CD4-positive, alpha-beta memory T cell (primary cell): ENCODE measurements at regions of chr3 and their contacts with region 1.

Region 1: DNA sequence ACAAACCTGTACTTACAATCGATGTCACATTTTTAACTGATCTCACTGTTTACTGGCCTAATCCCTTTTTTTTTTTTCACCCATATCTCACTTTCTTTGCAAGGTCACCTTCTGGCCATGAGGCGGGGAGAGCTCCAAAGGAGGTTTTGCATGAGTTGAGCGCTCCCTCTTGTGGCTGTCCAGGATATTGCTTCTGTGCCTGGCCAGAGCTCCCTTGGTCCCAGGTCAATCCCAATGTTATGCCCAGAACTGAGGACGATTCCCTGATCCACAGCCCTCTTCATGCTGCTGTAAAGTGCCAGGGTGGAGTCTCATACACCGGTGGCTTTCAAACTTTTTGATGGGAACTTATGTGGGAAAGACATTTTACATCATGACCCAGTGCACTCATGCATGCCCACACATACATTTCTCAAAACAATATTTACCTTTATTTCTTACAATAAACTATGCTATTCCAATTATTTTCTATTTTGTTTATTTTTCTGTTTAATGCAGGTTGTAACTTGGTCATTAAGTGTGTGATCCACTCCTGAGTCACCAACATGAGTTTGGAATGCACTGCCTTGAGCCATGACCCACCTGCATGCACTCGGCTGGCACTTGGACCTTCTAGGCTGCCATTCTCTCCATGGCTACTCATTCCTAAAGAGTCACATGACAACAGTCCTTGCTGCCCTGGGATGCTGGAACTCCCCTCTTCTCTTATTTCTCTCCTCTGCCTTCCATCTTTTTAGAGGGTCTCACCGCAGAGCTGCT is 9.6 kb upstream of the SST start:
- DNase-seq: peak; percentile 37 to 63 (median 54)
- H3K4me3 ChIP-seq: no peak overlapping the region
- H3K4me3 Mint-ChIP-seq: no peak overlapping the region
- H3K27ac ChIP-seq: no peak overlapping the region
- H3K27ac Mint-ChIP-seq: no peak overlapping the region
- H3K4me1 ChIP-seq: no peaks in the 10 kb centered on the region
- H3K4me1 Mint-ChIP-seq: peaks cover 0 to 2% (median 0%) of the 10 kb centered on the region in 4 donors
- H3K27me3 ChIP-seq: no peaks in the 10 kb centered on the region
- H3K27me3 Mint-ChIP-seq: peaks cover 29 to 43% of the 10 kb centered on the region in 2 donors

Region 2: DNA sequence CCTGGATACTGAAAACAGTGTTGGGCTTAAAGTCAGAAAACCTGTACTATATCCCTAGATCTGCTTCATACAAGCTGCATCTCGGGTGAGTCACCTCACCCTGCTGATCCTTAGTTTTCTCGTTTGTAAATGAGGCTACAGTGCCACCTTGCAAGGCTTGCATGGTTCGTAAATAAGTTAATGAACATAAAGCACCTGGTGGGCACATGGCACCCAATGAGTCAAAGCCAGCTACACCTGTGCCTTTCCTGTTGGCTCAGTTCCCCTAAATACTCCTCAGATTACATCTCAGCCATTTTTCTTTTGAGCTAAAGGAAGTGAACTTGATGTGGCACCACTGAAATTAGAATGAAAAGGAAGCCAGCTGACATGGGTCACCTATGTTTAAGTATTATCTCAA is 456.0 kb before region 1 on chr3:
- CTCF ChIA-PET with region 1: interaction called, 55 read pairs
- POLR2A ChIA-PET with region 1: no interaction called
- intact Hi-C with region 1: no loop called
- DNase-seq: no peak
- H3K4me3 ChIP-seq: no peak overlapping the region
- H3K4me3 Mint-ChIP-seq: no peak overlapping the region
- H3K27ac ChIP-seq: no peak overlapping the region
- H3K27ac Mint-ChIP-seq: no peak overlapping the region
- H3K4me1 ChIP-seq: no peaks in the 10 kb centered on the region
- H3K4me1 Mint-ChIP-seq: no peaks in the 10 kb centered on the region
- H3K27me3 ChIP-seq: peaks cover 3% of the 10 kb centered on the region
- H3K27me3 Mint-ChIP-seq: peaks cover 8 to 13% of the 10 kb centered on the region in 2 donors

Region 3: DNA sequence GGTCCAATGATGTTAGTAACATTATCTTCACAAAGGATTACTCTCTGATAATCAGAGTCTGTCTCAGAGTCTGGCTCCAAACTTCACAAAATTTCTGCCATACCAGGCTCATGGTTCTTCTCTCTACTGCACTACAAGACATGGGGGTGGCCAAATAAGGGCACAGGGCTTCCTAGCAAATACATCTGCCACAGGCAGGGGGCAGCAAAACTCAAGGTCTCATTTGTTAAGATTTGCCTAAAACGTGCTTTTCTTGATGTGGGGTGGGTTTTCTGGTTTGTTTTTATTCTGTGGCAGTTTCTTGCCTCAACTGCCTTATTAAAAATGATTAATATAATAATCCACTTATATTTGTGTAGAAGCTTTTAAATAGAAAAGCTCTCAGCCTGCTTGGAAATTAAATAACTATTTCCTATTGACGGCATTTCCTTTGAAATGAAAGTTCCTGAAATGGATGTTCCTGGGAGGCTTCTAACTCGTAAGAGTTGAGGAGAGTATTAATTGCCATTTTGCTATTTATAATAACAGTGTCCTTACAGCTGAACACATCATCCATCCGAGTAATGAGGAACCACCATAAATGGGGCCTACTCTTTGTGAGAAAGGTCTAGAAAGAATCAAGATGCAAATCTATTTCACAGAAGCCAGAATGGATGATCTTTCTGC is 63.4 kb before region 1 on chr3:
- CTCF ChIA-PET with region 1: interaction called, 15 read pairs
- POLR2A ChIA-PET with region 1: no interaction called
- intact Hi-C with region 1: loop called (anchors 1 kb)
- DNase-seq: peak; percentile 21 to 38 (median 36)
- H3K4me3 ChIP-seq: no peak overlapping the region
- H3K4me3 Mint-ChIP-seq: no peak overlapping the region
- H3K27ac ChIP-seq: no peak overlapping the region
- H3K27ac Mint-ChIP-seq: no peak overlapping the region
- H3K4me1 ChIP-seq: no peaks in the 10 kb centered on the region
- H3K4me1 Mint-ChIP-seq: peaks cover 0 to 4% (median under 1%) of the 10 kb centered on the region in 4 donors
- H3K27me3 ChIP-seq: no peaks in the 10 kb centered on the region
- H3K27me3 Mint-ChIP-seq: peaks cover 5 to 11% of the 10 kb centered on the region in 2 donors

Region 4: GRCh38 chr3:187694801-187695200 is 15.0 kb after region 1 on chr3:
- CTCF ChIA-PET with region 1: interaction called, 24 read pairs
- POLR2A ChIA-PET with region 1: no interaction called
- intact Hi-C with region 1: no loop called
- DNase-seq: no peak
- H3K4me3 ChIP-seq: no peak overlapping the region
- H3K4me3 Mint-ChIP-seq: no peak overlapping the region
- H3K27ac ChIP-seq: no peak overlapping the region
- H3K27ac Mint-ChIP-seq: no peak overlapping the region
- H3K4me1 ChIP-seq: no peaks in the 10 kb centered on the region
- H3K4me1 Mint-ChIP-seq: no peaks in the 10 kb centered on the region
- H3K27me3 ChIP-seq: no peaks in the 10 kb centered on the region
- H3K27me3 Mint-ChIP-seq: peaks cover 8 to 24% of the 10 kb centered on the region in 2 donors

Region 5: DNA sequence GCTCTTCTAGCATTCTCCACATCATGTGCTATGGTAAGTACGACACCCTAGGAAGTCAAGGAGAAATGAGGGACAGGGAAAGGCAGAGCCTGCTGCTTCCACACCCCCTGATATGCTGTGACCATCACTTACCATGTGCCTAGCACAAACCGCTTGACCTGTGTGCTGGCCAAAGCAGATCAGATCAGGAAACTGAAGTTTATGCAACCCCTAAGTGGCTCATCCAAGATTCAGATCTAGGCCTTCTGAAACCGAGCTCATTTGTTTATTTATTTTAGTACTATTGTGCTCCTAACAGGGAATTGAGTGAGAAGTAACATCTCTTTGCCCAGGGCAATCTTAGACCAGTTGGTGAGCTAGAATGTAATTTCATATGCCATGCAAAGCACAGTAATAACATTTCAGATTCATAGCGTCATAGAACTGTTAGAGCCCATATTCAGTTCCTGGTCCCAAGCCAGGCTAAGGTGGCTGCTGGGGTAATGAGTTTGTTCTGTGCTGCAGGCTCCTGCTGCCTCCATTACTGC is 22.8 kb after region 1 on chr3 and contains the start of gene RTP2:
- CTCF ChIA-PET with region 1: interaction called, 15 read pairs
- POLR2A ChIA-PET with region 1: no interaction called
- intact Hi-C with region 1: no loop called
- DNase-seq: no peak
- H3K4me3 ChIP-seq: no peak within 1 kb of the TSS
- H3K4me3 Mint-ChIP-seq: no peak within 1 kb of the TSS
- H3K27ac ChIP-seq: no peak within 1 kb of the TSS
- H3K27ac Mint-ChIP-seq: no peak within 1 kb of the TSS
- H3K4me1 ChIP-seq: no peaks in the 10 kb centered on the region
- H3K4me1 Mint-ChIP-seq: no peaks in the 10 kb centered on the region
- H3K27me3 ChIP-seq: no peaks in the 10 kb centered on the region
- H3K27me3 Mint-ChIP-seq: peaks cover 0 to under 1% of the 10 kb centered on the region in 2 donors
- total RNA-seq, gene RTP2: not detected

Region 6: GRCh38 chr3:187709155-187709554 is 29.3 kb after region 1 on chr3:
- CTCF ChIA-PET with region 1: interaction called, 38 read pairs
- POLR2A ChIA-PET with region 1: no interaction called
- intact Hi-C with region 1: loop called (anchors 2 kb)
- DNase-seq: no peak
- H3K4me3 ChIP-seq: no peak overlapping the region
- H3K4me3 Mint-ChIP-seq: no peak overlapping the region
- H3K27ac ChIP-seq: no peak overlapping the region
- H3K27ac Mint-ChIP-seq: no peak overlapping the region
- H3K4me1 ChIP-seq: peaks cover 12% of the 10 kb centered on the region
- H3K4me1 Mint-ChIP-seq: peaks cover 7 to 12% (median 12%) of the 10 kb centered on the region in 4 donors
- H3K27me3 ChIP-seq: no peaks in the 10 kb centered on the region
- H3K27me3 Mint-ChIP-seq: no peaks in the 10 kb centered on the region

Region 7: GRCh38 chr3:187714404-187714979 is 34.7 kb after region 1 on chr3:
- CTCF ChIA-PET with region 1: interaction called, 38 read pairs
- POLR2A ChIA-PET with region 1: no interaction called
- intact Hi-C with region 1: loop called (anchors 2 kb)
- DNase-seq: peak; percentile 65 to 75 (median 70)
- H3K4me3 ChIP-seq: no peak overlapping the region
- H3K4me3 Mint-ChIP-seq: peak overlapping the region in 2 of 8 donors; percentile 63 to 65
- H3K27ac ChIP-seq: no peak overlapping the region
- H3K27ac Mint-ChIP-seq: peak overlapping the region in 6 of 7 donors; percentile 13 to 61 (median 19)
- H3K4me1 ChIP-seq: peaks cover 15% of the 10 kb centered on the region
- H3K4me1 Mint-ChIP-seq: peaks cover 13 to 18% (median 17%) of the 10 kb centered on the region in 4 donors
- H3K27me3 ChIP-seq: no peaks in the 10 kb centered on the region
- H3K27me3 Mint-ChIP-seq: no peaks in the 10 kb centered on the region